Adrenal gland (tissue), 19 donors: ENCODE measurements at regions of chr2 and their contacts with region 1.

Region 1: GRCh38 chr2:113138428-113139322 is 11.3 kb downstream of the IL1RN start:
- DNase-seq: peak; percentile 48 to 79 (median 71)
- H3K4me3 ChIP-seq: no peak overlapping the region
- H3K27ac ChIP-seq: peak overlapping the region in 2 of 5 donors; percentile 26 to 71
- H3K4me1 ChIP-seq: peaks cover 0 to 11% of the 10 kb centered on the region in 2 donors
- H3K27me3 ChIP-seq: no peaks in the 10 kb centered on the region
- CTCF ChIP-seq: peak; percentile 75 to 89 (median 82)
- POLR2A ChIP-seq: no peak

Region 2: GRCh38 chr2:112764071-112765044 is 374.3 kb before region 1 on chr2 and contains the start of gene CKAP2L:
- intact Hi-C with region 1: no loop called
- DNase-seq: peak; percentile 94 to 98 (median 96)
- H3K4me3 ChIP-seq: peak within 1 kb of the TSS in 2 of 4 donors; percentile 52 to 74
- H3K27ac ChIP-seq: no peak within 1 kb of the TSS
- H3K4me1 ChIP-seq: peaks cover 6 to 11% of the 10 kb centered on the region in 2 donors
- H3K27me3 ChIP-seq: no peaks in the 10 kb centered on the region
- CTCF ChIP-seq: no peak
- POLR2A ChIP-seq: no peak
- total RNA-seq, gene CKAP2L: 0.35 to 6.9 (median 0.98) TPM in 8 of 9 donors, not detected in the other

Region 3: DNA sequence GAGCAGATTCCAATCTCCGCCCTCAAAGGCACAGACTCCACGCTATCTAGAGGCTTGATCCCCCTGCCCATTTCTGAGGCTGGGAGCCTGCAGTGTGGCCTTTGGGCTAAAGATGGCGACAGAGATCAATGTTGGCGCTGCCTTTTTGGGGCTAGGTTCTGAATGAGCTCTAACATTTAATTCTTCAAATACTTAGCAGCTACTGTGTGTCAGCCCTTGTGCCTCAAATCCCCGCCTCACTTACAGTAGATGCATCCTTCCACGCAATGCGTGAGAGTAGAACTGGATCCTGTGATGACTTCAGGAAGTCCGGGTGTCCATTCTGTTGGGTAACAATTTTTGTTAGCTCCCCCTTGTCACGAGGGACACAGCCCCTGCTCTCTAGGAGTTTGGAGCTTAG is 58.5 kb before region 1 on chr2:
- intact Hi-C with region 1: loop called in 1 of 2 experiments (anchors 5 kb)
- DNase-seq: peak; percentile 35 to 65 (median 51)
- H3K4me3 ChIP-seq: no peak overlapping the region
- H3K27ac ChIP-seq: no peak overlapping the region
- H3K4me1 ChIP-seq: no peaks in the 10 kb centered on the region
- H3K27me3 ChIP-seq: no peaks in the 10 kb centered on the region
- CTCF ChIP-seq: peak; percentile 46 to 72 (median 66)
- POLR2A ChIP-seq: no peak

Region 4: GRCh38 chr2:113198790-113199612 is 60.3 kb after region 1 on chr2:
- intact Hi-C with region 1: loop called (anchors 5 kb)
- DNase-seq: peak; percentile 84 to 89 (median 86)
- H3K4me3 ChIP-seq: peak overlapping the region; percentile 7 to 68 (median 40)
- H3K27ac ChIP-seq: peak overlapping the region; percentile 65 to 92 (median 83)
- H3K4me1 ChIP-seq: peaks cover 8 to 20% of the 10 kb centered on the region in 2 donors
- H3K27me3 ChIP-seq: no peaks in the 10 kb centered on the region
- CTCF ChIP-seq: peak; percentile 70 to 99 (median 85)
- POLR2A ChIP-seq: peak in 1 of 2 donors; percentile 67

Region 5: GRCh38 chr2:113382476-113382875 is 243.8 kb after region 1 on chr2:
- intact Hi-C with region 1: loop called in 1 of 2 experiments (anchors 10 kb)
- DNase-seq: no peak
- H3K4me3 ChIP-seq: no peak overlapping the region
- H3K27ac ChIP-seq: no peak overlapping the region
- H3K4me1 ChIP-seq: no peaks in the 10 kb centered on the region
- H3K27me3 ChIP-seq: no peaks in the 10 kb centered on the region
- CTCF ChIP-seq: no peak
- POLR2A ChIP-seq: no peak